ENCODE measurements at regions of chr12 and their contacts with region 1.

Region 1: DNA sequence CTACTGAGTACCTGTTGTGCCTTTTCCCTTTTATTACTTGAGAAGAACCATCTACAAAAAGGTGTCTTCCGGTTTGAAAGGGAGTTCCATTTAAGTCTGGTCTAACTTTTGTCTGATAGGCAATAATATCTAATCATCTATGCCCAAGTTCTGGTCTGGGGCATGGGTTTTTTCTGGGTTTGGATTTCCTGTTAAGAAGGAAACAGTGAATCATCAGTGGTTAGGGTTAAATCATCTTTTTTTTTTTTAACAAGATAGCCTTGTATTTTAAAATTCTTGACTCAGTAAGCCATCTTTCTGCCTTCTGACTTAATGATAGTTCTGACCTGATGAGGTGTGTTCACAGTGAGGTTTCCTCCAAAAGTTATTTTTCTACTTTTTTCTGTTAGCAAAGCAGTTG is 29.3 kb upstream of the CPNE8 start:
- DNase-seq: no peak
- H3K4me3 ChIP-seq: no peak overlapping the region
- H3K27ac ChIP-seq: no peak overlapping the region
- H3K4me1 ChIP-seq: no peaks in the 10 kb centered on the region
- H3K27me3 ChIP-seq: no peaks in the 10 kb centered on the region
- CTCF ChIP-seq: no peak

Region 2: DNA sequence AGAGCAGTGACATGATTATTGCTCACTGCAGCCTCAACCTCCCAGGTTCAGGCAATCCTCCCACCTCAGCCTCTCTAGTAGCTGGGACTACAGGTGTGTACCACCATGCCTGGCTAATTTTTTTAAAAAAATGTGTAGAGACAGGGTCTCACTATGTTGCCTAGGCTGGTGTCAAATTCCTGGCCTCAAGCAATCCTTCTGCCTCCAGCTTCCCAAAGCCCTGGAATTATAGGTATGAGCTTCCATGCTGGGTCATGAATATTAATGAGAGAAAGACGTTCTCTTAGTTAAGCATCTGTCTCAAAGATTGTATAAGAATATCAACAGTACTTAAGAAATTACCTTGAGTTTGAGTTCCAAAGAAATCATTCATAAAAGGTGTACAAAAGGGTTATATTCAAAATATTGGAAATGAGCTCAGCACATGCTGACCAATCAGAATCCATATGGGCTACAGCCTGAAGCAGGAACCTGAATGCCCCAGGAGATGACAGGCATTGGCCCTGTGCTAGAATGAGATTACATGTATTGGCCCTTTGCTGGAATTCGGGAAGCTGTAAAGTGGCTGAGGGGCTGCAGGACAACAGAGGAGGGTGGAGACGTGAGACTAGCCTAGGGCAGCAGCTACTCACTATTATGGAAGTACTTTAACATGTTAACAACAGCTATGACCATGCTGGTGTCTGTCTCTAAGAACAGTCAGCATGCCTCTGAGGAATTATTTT is 127.7 kb after region 1 on chr12:
- dilution Hi-C with region 1: loop called (anchors 25 kb)
- DNase-seq: no peak
- H3K4me3 ChIP-seq: no peak overlapping the region
- H3K27ac ChIP-seq: no peak overlapping the region
- H3K4me1 ChIP-seq: no peaks in the 10 kb centered on the region
- H3K27me3 ChIP-seq: no peaks in the 10 kb centered on the region
- CTCF ChIP-seq: no peak

Measured in keratinocyte (primary cell).